ENCODE measurements at regions of chr17 and their contacts with region 1.

Region 1: GRCh38 chr17:72576289-72576759 is 455.5 kb downstream of the SOX9 start:
- DNase-seq: no peak
- ATAC-seq: peak in 1 of 8 donors; percentile 16
- H3K4me3 ChIP-seq: no peak overlapping the region
- H3K27ac ChIP-seq: no peak overlapping the region
- H3K4me1 ChIP-seq: no peaks in the 10 kb centered on the region
- H3K27me3 ChIP-seq: peaks cover 0 to 60% (median 32%) of the 10 kb centered on the region in 7 donors
- CTCF ChIP-seq: no peak

Region 2: GRCh38 chr17:72053449-72053848 is 522.9 kb before region 1 on chr17:
- intact Hi-C with region 1: no loop called
- DNase-seq: no peak
- ATAC-seq: no peak
- H3K4me3 ChIP-seq: peak overlapping the region in 2 of 10 donors; percentile 9 to 22
- H3K27ac ChIP-seq: no peak overlapping the region
- H3K4me1 ChIP-seq: no peaks in the 10 kb centered on the region
- H3K27me3 ChIP-seq: peaks cover 0 to 27% (median 7%) of the 10 kb centered on the region in 7 donors
- CTCF ChIP-seq: no peak

Region 3: DNA sequence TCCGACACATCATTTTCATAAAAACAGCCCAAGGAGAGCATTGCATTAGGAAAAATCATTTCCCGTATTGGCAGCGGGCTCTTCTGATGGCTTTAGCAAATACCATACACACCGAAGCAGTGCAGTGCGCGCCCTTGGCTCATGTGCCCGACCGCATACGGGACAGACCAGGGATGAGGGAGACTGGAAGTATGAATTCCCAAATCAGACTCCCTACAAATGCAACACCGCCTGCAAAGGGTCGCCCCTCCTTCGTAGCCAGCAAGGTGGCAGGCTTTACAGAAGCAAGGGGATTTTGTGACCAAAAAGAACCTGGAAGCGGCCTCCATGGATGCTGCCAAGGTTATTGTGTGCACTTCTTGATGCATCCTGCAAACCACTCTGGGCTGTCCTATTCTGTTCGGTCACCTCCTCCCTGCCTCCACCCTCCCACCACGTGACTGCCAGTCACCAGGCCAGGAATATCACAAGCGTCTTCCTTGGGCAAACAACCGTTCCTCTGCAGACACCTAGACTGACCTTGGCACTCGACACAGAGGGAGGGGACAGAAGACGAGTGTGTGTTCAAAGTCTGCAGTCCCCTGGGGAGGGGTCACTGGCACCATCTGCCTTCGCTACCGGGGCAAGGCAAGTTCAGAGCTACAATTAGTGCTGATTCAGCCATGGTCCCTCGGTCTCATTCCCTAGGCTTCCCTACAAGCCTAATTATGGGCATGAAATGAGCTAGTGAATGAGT is 55.8 kb after region 1 on chr17:
- intact Hi-C with region 1: no loop called
- DNase-seq: peak in 1 of 2 donors; percentile 12
- ATAC-seq: peak in 5 of 8 donors; percentile 57 to 93 (median 64)
- H3K4me3 ChIP-seq: no peak overlapping the region
- H3K27ac ChIP-seq: no peak overlapping the region
- H3K4me1 ChIP-seq: peaks cover 0 to 5% (median 0%) of the 10 kb centered on the region in 9 donors
- H3K27me3 ChIP-seq: no peaks in the 10 kb centered on the region
- CTCF ChIP-seq: no peak

Region 4: GRCh38 chr17:73166731-73167581 is 590.6 kb after region 1 on chr17:
- intact Hi-C with region 1: loop called in 2 of 10 experiments (anchors 10 kb)
- DNase-seq: no peak
- ATAC-seq: no peak
- H3K4me3 ChIP-seq: peak overlapping the region in 7 of 10 donors; percentile 46 to 71 (median 58)
- H3K27ac ChIP-seq: peak overlapping the region in 1 of 10 donors; percentile 13
- H3K4me1 ChIP-seq: peaks cover 0 to 32% (median 16%) of the 10 kb centered on the region in 9 donors
- H3K27me3 ChIP-seq: peaks cover 0 to 76% (median 68%) of the 10 kb centered on the region in 7 donors
- CTCF ChIP-seq: no peak

Region 5: DNA sequence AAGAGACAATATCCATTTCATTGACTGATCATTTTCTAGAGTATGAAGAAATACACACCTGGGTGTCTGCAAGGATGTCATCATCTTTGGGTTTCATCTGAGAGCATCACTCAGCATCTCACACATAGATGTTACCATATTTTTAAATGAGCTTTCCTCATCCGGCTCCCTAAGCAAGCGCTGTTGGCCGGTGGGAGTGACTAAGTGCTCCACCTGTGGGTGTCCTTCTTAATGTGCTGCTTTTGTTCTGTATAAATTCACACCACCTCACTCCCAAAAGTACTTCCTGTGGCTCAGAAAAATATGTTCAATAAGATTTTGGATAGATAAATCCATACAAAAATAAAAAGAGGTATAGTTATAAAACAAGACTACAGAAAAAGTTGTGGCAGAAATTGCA is 595.9 kb after region 1 on chr17:
- intact Hi-C with region 1: loop called in 2 of 10 experiments (anchors 10 kb)
- DNase-seq: no peak
- ATAC-seq: no peak
- H3K4me3 ChIP-seq: no peak overlapping the region
- H3K27ac ChIP-seq: no peak overlapping the region
- H3K4me1 ChIP-seq: peaks cover 0 to 3% (median 0%) of the 10 kb centered on the region in 9 donors
- H3K27me3 ChIP-seq: peaks cover 0 to 25% (median 24%) of the 10 kb centered on the region in 7 donors
- CTCF ChIP-seq: no peak